IMR-90 (cell line): ENCODE measurements at regions of chr18 and their contacts with region 1.

Region 1: GRCh38 chr18:74110976-74111375 is 36.7 kb downstream of the FBXO15 start:
- DNase-seq: no peak
- ATAC-seq: no peak
- H3K4me3 ChIP-seq: no peak overlapping the region
- H3K27ac ChIP-seq: no peak overlapping the region
- H3K4me1 ChIP-seq: peaks cover 6% of the 10 kb centered on the region
- H3K27me3 ChIP-seq: no peaks in the 10 kb centered on the region
- CTCF ChIP-seq: no peak
- POLR2A ChIP-seq: no peak
- RAD21 ChIP-seq: no peak

Region 2: GRCh38 chr18:73717573-73717972 is 393.4 kb before region 1 on chr18:
- CTCF ChIA-PET with region 1: no interaction called
- POLR2A ChIA-PET with region 1: no interaction called
- dilution Hi-C with region 1: no loop called
- in situ Hi-C with region 1: no loop called
- intact Hi-C with region 1: no loop called
- DNase-seq: peak; percentile 32
- ATAC-seq: no peak
- H3K4me3 ChIP-seq: no peak overlapping the region
- H3K27ac ChIP-seq: no peak overlapping the region
- H3K4me1 ChIP-seq: peaks cover 11% of the 10 kb centered on the region
- H3K27me3 ChIP-seq: no peaks in the 10 kb centered on the region
- CTCF ChIP-seq: no peak
- POLR2A ChIP-seq: no peak
- RAD21 ChIP-seq: no peak

Region 3: GRCh38 chr18:73918816-73919215 is 192.2 kb before region 1 on chr18:
- CTCF ChIA-PET with region 1: no interaction called
- POLR2A ChIA-PET with region 1: interaction called, 11 read pairs
- dilution Hi-C with region 1: no loop called
- in situ Hi-C with region 1: no loop called
- intact Hi-C with region 1: no loop called
- DNase-seq: no peak
- ATAC-seq: no peak
- H3K4me3 ChIP-seq: no peak overlapping the region
- H3K27ac ChIP-seq: no peak overlapping the region
- H3K4me1 ChIP-seq: no peaks in the 10 kb centered on the region; the same call in 1 of the 2 replicates
- H3K27me3 ChIP-seq: peaks cover 9% of the 10 kb centered on the region
- CTCF ChIP-seq: no peak
- POLR2A ChIP-seq: no peak
- RAD21 ChIP-seq: no peak